ENCODE measurements at regions of chr7 and their contacts with region 1.

Region 1: DNA sequence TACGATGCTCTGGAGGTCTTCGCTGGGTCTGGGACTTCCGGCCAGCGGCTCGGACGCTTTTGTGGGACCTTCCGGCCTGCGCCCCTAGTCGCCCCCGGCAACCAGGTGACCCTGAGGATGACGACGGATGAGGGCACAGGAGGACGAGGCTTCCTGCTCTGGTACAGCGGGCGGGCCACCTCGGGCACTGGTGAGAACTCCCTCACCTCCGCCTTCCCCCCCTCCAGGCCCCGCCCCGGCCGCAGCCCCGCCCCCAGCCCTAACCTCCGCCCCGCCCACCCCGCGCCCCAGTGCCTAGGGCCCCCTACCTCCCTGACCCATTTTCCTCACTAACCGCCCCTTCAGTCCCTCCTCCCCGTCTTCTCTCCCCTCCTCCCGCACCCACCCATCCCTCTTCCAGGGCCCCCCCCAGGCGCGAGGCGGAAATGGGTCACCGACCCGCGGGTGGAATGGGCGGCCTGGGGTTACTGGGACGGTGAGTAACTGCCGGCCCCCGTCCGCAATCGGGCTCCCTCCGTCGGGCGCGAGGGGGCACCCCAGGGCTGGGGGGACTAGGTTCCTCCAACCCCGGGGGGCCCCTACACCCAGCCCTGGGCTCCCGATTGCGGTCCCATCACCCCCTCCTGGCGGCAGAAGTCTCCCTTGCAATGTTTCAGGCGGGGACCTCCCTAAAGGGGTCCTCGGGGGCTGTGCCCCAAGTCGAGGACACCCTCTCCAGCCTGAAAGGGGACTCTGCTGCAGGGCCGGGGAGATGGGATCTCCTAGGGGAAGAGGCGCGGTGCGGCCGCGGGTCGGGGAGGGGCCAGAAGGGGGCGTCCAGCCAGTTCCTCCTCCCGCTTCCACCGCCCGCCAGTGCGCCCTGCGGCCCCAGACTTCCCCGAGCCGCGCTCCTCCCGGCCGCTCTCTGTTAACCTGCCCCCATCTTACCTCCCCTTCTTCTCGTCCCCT is 2.1 kb downstream of the PCOLCE start:
- DNase-seq: peak; percentile 64
- H3K4me3 ChIP-seq: peak overlapping the region; percentile 69
- H3K27ac ChIP-seq: peak overlapping the region; percentile 62
- H3K4me1 ChIP-seq: peaks cover 13% of the 10 kb centered on the region
- H3K27me3 ChIP-seq: no peaks in the 10 kb centered on the region
- CTCF ChIP-seq: peak; percentile 54

Region 2: GRCh38 chr7:100271716-100272537 is 332.4 kb before region 1 on chr7:
- CTCF ChIA-PET with region 1: no interaction called
- POLR2A ChIA-PET with region 1: interaction called, 23 read pairs
- intact Hi-C with region 1: no loop called
- DNase-seq: peak; percentile 97
- H3K4me3 ChIP-seq: peak overlapping the region; percentile 58
- H3K27ac ChIP-seq: no peak overlapping the region
- H3K4me1 ChIP-seq: no peaks in the 10 kb centered on the region
- H3K27me3 ChIP-seq: no peaks in the 10 kb centered on the region
- CTCF ChIP-seq: peak; percentile 35; the same call in 1 of the 2 replicates

Region 3: GRCh38 chr7:100489824-100490223 is 114.5 kb before region 1 on chr7:
- CTCF ChIA-PET with region 1: no interaction called
- POLR2A ChIA-PET with region 1: no interaction called
- intact Hi-C with region 1: no loop called
- DNase-seq: peak; percentile 95
- H3K4me3 ChIP-seq: no peak overlapping the region
- H3K27ac ChIP-seq: no peak overlapping the region
- H3K4me1 ChIP-seq: peaks cover 7% of the 10 kb centered on the region
- H3K27me3 ChIP-seq: no peaks in the 10 kb centered on the region
- CTCF ChIP-seq: no peak

Region 4: DNA sequence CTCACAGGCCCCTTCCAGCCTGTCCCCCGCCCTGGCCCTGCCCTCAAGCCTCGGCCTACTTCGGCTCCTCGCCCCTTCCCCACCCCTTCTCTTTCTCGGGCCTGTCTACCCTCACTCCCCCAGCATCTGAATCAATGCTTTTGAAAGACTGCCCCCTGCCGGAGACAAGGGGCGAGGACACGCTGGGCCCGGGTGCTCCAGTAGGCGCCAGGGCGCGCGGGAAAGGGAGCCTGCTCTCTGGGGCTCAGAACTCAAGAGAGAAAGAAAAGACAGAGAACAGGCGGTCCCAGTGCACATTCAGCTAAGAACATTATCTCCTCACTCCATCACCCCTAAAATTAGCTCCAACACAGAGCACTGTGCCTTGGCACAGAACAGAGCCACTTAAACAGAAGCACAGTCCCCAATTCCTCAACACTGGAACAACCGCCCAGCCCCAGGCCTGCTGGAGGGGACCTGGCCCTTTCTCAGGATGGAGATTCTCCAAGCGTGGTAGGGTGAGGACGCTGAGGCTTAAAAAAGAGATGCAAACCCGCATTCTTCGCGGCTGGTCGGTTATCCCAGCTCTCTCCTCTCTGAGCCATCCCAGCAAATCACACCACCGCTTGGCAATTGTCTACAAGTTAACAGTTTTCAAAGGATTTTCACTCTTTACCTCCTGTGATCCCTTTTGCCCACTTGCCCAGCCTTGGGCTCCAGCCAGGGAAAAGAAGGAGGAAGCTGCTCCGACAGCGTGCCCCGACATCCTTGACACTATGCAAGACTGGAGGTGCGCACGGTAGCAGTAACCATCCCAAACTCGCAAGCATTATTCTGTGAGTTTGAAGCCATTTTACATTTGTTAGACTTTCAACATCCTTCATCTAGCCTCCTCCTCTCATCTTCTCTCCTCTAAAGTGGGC is 87.6 kb after region 1 on chr7:
- CTCF ChIA-PET with region 1: no interaction called
- POLR2A ChIA-PET with region 1: interaction called, 3 read pairs
- intact Hi-C with region 1: loop called (anchors 5 kb)
- DNase-seq: peak; percentile 89
- H3K4me3 ChIP-seq: peak overlapping the region; percentile 98
- H3K27ac ChIP-seq: peak overlapping the region; percentile 4
- H3K4me1 ChIP-seq: peaks cover 15% of the 10 kb centered on the region
- H3K27me3 ChIP-seq: no peaks in the 10 kb centered on the region
- CTCF ChIP-seq: peak; percentile 98

Region 5: DNA sequence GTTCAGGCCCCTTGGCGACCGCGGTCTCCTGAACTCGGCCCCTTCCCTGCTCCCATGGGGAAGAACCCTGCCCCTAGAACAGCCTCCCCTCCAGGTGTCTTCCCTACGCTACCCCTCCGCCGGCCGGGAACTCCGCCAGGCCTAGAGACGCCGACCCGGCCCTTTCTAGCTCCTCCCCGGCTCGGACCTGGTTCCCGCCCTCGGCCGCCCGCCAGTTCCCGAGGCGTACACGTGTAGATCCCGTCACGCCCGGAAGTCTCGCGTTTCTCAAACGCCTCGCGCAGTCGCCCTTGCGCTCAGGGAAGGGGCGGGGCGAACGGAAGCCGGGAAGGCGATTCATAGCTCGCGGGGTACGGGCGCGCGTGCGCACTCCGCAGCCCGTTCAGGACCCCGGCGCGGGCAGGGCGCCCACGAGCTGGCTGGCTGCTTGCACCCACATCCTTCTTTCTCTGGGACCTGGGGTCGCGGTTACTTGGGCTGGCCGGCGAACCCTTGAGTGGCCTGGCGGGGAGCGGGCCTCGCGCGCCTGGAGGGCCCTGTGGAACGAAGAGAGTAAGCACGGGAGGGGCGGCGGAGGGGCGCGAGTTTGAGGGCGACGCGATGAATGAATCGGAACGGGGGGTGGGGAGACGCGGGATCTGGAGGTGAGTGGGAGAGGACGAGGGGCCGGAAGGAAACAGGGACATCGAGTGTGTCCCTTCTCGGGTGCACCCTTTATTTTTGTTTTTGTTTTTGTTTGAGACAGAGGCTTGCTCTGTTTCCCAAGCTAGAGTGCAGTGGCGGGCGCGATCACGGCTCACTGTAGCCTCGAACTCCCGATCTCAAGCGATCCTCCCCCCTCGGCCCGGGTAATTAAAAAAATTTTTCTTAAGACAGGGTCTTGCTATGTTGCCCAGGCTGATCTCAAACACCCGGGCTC is 101.7 kb after region 1 on chr7 and contains the start of gene POP7:
- CTCF ChIA-PET with region 1: interaction called, 10 read pairs
- POLR2A ChIA-PET with region 1: no interaction called
- intact Hi-C with region 1: no loop called
- DNase-seq: peak; percentile 99
- H3K4me3 ChIP-seq: peak within 1 kb of the TSS; percentile 77
- H3K27ac ChIP-seq: peak within 1 kb of the TSS; percentile 95
- H3K4me1 ChIP-seq: peaks cover 6% of the 10 kb centered on the region
- H3K27me3 ChIP-seq: peaks cover 17% of the 10 kb centered on the region
- CTCF ChIP-seq: no peak
- total RNA-seq, gene POP7: 68.8 and 72.6 TPM in 2 replicates